Activated T-helper 1 cell treated with anti-CD3 and anti-CD28 coated beads, Interleukin-12 subunit alpha, Interleukin-12 subunit beta, Interleukin-2, Interleukin-4 antibody, amounts not matched to agents 30 ng/mL and 10 ng/mL and 1 ng/mL, durations not matched to agents 14 hours and 24 hours and 36 hours (primary cell): ENCODE measurements at regions of chr12 and their contacts with region 1.

Region 1: DNA sequence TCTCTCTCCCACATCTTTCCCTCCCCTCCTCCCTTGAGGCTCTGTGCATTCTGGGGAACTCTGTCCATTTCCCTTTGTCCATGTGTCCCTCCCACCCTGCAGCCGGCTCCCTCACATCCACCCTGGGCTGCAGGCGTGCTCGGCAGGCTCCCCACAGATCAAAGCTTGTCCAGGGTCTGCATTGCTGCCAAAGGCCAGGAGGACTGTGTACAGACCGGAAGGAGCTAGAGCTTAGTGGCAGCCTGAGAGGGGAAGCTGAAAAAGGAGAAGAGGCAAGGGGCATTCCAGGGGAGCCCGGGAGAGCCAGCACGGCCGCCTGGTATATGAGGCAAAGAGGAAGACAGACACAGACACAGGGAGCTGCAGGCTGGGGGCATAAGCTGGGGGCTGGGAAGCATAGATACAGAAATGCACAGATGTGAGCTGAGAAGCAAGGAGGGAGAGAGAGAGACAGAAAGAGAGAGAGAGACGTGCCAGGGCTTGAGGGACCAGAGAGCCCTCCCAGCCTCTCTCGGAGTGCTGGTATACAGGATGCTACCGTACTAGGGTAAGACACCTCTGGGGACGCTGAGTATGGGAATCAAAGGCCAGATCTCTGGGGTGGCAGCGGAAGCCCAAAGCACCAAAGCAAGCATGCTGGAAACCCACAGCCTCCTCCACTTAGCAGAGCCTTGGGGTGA is 3.3 kb downstream of the CD4 start:
- DNase-seq: peak; percentile 40
- H3K4me3 Mint-ChIP-seq: peak overlapping the region; percentile 94
- H3K27ac Mint-ChIP-seq: peak overlapping the region; percentile 87
- H3K4me1 Mint-ChIP-seq: peaks cover 65% of the 10 kb centered on the region
- H3K27me3 Mint-ChIP-seq: no peaks in the 10 kb centered on the region

Region 2: GRCh38 chr12:6039894-6040568 is 752.6 kb before region 1 on chr12:
- intact Hi-C with region 1: no loop called
- DNase-seq: peak; percentile 26
- H3K4me3 Mint-ChIP-seq: no peak overlapping the region
- H3K27ac Mint-ChIP-seq: no peak overlapping the region
- H3K4me1 Mint-ChIP-seq: peaks cover 7% of the 10 kb centered on the region
- H3K27me3 Mint-ChIP-seq: peaks cover 2% of the 10 kb centered on the region

Region 3: DNA sequence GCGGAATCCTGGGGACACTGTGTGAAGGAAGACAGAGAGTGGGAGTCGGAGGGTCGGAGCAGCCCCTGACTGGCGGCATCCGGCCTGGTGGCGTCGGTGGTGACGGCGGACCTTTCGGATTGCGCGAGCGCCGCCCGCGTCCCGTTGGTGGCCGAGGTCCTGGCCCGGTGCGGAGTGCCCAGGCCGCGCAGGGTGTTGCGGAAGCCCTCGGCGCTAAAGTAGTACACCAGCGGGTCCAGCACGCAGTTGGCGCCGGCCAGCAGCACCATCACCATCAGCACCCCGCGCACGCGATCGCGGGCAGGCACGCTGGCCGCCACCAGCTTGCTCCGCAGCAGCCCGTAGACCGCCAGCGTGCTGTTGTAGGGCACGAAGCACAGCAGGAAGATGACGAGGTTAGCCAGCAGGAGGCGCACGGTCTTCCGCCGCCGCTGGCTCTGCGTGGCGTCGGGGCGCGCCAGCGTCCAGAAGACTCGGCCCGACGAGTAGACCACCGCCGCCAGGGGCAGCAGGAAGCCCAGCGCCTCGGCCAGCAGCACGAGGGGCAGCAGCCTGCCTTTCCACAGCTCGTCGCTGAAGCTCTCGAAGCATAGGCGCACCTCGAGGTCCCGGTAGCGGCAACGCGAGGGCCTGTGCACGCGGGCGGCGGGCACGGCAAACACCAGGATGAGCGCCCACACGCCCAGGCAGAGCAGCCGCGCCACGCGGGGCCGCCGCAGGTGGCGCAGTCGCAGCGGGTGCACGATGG is 172.4 kb before region 1 on chr12:
- intact Hi-C with region 1: no loop called
- DNase-seq: peak; percentile 42
- H3K4me3 Mint-ChIP-seq: peak overlapping the region; percentile 51
- H3K27ac Mint-ChIP-seq: no peak overlapping the region
- H3K4me1 Mint-ChIP-seq: peaks cover 9% of the 10 kb centered on the region
- H3K27me3 Mint-ChIP-seq: no peaks in the 10 kb centered on the region

Region 4: GRCh38 chr12:6697584-6698351 is 94.9 kb before region 1 on chr12:
- intact Hi-C with region 1: no loop called
- DNase-seq: no peak
- H3K4me3 Mint-ChIP-seq: no peak overlapping the region
- H3K27ac Mint-ChIP-seq: no peak overlapping the region
- H3K4me1 Mint-ChIP-seq: peaks cover 6% of the 10 kb centered on the region
- H3K27me3 Mint-ChIP-seq: peaks cover 46% of the 10 kb centered on the region

Region 5: GRCh38 chr12:6752921-6753771 is 39.5 kb before region 1 on chr12 and contains the start of gene MLF2:
- intact Hi-C with region 1: loop called (anchors 1 kb)
- DNase-seq: peak; percentile 97
- H3K4me3 Mint-ChIP-seq: peak within 1 kb of the TSS; percentile 94
- H3K27ac Mint-ChIP-seq: peak within 1 kb of the TSS; percentile 96
- H3K4me1 Mint-ChIP-seq: peaks cover 32% of the 10 kb centered on the region
- H3K27me3 Mint-ChIP-seq: no peaks in the 10 kb centered on the region
- total RNA-seq, gene MLF2: 159 and 161 TPM in 2 replicates

Region 6: DNA sequence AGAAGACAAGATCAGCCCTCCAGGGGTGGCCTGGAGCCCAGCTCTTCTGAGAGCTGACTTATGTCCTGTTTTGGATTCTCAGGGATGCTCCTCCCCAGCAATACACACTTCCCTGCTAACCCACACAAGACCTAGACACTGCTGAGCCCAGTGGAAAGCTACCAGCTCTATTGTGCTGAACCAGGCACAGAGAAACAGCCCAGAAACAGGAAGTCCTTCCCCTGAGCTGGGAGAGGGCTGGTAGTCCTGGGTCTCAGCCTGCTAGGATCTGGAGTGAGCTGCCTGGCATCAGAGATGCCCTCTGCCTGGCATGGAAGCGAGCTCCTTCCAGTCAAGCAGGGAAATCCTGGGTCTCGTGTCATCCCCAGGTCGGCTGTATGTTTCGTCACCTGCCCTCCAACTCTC is 21.6 kb before region 1 on chr12:
- intact Hi-C with region 1: loop called (anchors 2 kb)
- DNase-seq: no peak
- H3K4me3 Mint-ChIP-seq: peak overlapping the region; percentile 82
- H3K27ac Mint-ChIP-seq: peak overlapping the region; percentile 86
- H3K4me1 Mint-ChIP-seq: peaks cover 77% of the 10 kb centered on the region
- H3K27me3 Mint-ChIP-seq: no peaks in the 10 kb centered on the region

Region 7: GRCh38 chr12:6825398-6826124 is 32.9 kb after region 1 on chr12:
- intact Hi-C with region 1: loop called (anchors 1 kb)
- DNase-seq: peak; percentile 72
- H3K4me3 Mint-ChIP-seq: peak overlapping the region; percentile 40
- H3K27ac Mint-ChIP-seq: peak overlapping the region; percentile 59
- H3K4me1 Mint-ChIP-seq: peaks cover 46% of the 10 kb centered on the region
- H3K27me3 Mint-ChIP-seq: peaks cover 46% of the 10 kb centered on the region

Region 8: DNA sequence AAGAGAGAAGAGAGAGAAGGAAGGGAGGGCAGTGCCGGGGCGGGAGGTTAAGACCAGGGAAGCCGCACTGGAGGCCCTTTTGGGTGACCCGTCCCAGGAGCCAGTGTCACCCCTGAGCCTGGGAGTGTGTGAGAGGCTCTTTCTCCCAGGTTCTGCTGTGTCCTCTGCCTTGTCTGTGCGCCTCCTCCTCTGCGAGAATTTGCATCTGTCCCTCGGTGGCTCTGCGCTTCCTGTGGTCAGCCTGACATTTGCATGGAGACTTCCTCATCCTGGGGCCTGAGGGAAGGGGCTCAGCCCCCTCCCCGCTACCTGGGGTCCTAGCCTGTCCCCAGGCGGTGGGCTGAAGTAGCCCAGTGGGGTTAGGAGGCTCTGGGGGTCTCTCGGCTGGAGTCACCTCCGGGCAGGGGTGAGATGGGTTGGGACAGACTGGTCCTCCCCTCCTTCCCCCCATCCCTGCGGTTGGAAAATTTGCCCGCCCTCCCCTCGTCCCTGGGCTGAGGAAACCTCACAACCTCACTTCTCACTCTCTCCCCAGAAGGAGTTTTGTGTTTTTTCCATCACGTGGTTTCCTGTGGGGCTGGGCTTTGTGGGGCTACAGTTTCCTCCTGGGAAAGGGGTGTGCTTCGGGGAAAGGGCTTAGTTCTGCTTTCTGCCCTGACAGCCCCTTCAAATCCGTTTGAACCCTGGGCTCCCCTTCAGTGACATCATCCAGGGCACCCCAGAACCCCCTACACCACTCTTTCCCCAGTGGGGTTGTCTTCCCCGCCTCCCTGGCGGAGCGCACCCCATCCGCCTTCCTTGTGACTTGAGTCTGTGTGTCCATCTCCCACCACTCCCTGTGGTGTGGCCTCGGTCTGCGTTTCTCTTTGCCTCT is 161.0 kb after region 1 on chr12:
- intact Hi-C with region 1: loop called (anchors 5 kb)
- DNase-seq: peak; percentile 79
- H3K4me3 Mint-ChIP-seq: peak overlapping the region; percentile 98
- H3K27ac Mint-ChIP-seq: peak overlapping the region; percentile 97
- H3K4me1 Mint-ChIP-seq: peaks cover 80% of the 10 kb centered on the region
- H3K27me3 Mint-ChIP-seq: no peaks in the 10 kb centered on the region